Activated T-helper 1 cell treated with anti-CD3 and anti-CD28 coated beads, Interleukin-12 subunit alpha, Interleukin-12 subunit beta, Interleukin-2, Interleukin-4 antibody, amounts not matched to agents 30 ng/mL and 10 ng/mL and 1 ng/mL, durations not matched to agents 14 hours and 24 hours and 36 hours (primary cell): ENCODE measurements at regions of chr13 and their contacts with region 1.

Region 1: GRCh38 chr13:40026174-40026585 is 370.7 kb downstream of the COG6 start:
- DNase-seq: peak; percentile 67
- H3K4me3 Mint-ChIP-seq: peak overlapping the region; percentile 24
- H3K27ac Mint-ChIP-seq: peak overlapping the region; percentile 48
- H3K4me1 Mint-ChIP-seq: peaks cover 59% of the 10 kb centered on the region
- H3K27me3 Mint-ChIP-seq: peaks cover 5% of the 10 kb centered on the region

Region 2: GRCh38 chr13:39095500-39095899 is 930.7 kb before region 1 on chr13:
- intact Hi-C with region 1: loop called (anchors 2 kb)
- DNase-seq: no peak
- H3K4me3 Mint-ChIP-seq: peak overlapping the region; percentile 68
- H3K27ac Mint-ChIP-seq: peak overlapping the region; percentile 92
- H3K4me1 Mint-ChIP-seq: peaks cover 35% of the 10 kb centered on the region
- H3K27me3 Mint-ChIP-seq: no peaks in the 10 kb centered on the region

Region 3: GRCh38 chr13:39970177-39970846 is 55.9 kb before region 1 on chr13:
- intact Hi-C with region 1: no loop called
- DNase-seq: no peak
- H3K4me3 Mint-ChIP-seq: no peak overlapping the region
- H3K27ac Mint-ChIP-seq: no peak overlapping the region
- H3K4me1 Mint-ChIP-seq: peaks cover 5% of the 10 kb centered on the region
- H3K27me3 Mint-ChIP-seq: peaks cover 11% of the 10 kb centered on the region

Region 4: GRCh38 chr13:39998166-39998565 is 28.0 kb before region 1 on chr13:
- intact Hi-C with region 1: loop called (anchors 2 kb)
- DNase-seq: no peak
- H3K4me3 Mint-ChIP-seq: no peak overlapping the region
- H3K27ac Mint-ChIP-seq: no peak overlapping the region
- H3K4me1 Mint-ChIP-seq: peaks cover 13% of the 10 kb centered on the region
- H3K27me3 Mint-ChIP-seq: peaks cover 13% of the 10 kb centered on the region

Region 5: GRCh38 chr13:40012190-40012589 is 14.0 kb before region 1 on chr13:
- intact Hi-C with region 1: no loop called
- DNase-seq: no peak
- H3K4me3 Mint-ChIP-seq: no peak overlapping the region
- H3K27ac Mint-ChIP-seq: no peak overlapping the region
- H3K4me1 Mint-ChIP-seq: peaks cover 8% of the 10 kb centered on the region
- H3K27me3 Mint-ChIP-seq: peaks cover 11% of the 10 kb centered on the region

Region 6: DNA sequence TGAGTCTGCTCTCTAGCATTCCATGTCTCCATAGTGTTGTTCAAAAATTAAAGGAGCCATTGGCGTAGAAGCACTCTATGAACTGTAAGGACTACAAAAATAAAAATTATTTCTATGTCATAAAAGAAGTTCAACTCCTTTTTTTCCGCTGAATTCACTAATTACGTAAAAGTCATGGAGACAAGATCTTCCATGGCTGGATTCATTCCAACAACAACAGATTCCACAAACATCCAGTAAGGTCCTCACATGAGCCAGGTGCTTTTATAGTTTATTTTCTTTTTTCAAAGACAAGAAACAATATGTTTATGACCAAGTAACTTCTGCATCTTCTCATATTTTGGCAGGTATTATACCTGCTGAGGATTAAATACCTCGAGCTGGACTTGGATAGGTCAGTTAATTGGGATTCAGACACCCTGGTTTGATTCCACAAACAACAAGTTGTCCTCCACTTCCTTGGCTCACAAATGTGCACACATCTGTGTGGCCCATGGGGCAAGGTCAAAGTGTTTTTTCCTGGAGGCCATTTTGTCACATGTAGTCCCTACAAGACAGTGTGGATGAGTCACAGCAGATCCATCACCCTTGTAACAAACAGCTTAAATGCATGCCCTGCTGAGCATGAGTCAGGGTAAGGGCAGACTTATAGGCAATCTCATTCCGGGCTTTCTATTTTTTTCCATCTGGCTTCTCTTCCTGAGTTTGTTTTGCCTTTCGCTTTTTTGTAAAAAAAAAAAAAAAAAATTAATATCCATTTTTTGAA is 104.9 kb after region 1 on chr13:
- intact Hi-C with region 1: loop called (anchors 1 kb)
- DNase-seq: no peak
- H3K4me3 Mint-ChIP-seq: no peak overlapping the region
- H3K27ac Mint-ChIP-seq: peak overlapping the region; percentile 12
- H3K4me1 Mint-ChIP-seq: peaks cover 63% of the 10 kb centered on the region
- H3K27me3 Mint-ChIP-seq: no peaks in the 10 kb centered on the region

Region 7: DNA sequence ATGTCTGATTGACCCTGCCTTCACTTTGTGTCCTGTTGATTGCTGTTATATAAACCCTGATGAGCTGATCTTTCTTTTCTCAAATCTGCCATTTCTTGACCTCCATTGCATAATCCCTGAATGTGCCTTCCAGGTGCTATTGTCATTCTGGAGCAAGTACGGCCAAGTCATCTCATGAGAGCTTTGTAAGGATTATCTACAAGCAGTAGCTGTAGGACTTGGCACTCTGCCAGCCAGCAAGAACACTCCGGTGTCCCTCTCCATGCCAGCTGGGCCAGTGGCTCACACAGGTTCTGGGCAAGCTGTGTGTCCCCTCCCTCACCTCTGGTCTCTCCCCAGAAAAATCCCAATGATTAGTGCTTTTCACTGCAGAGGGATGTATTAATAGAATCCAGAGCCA is 292.2 kb after region 1 on chr13:
- intact Hi-C with region 1: loop called (anchors 1 kb)
- DNase-seq: no peak
- H3K4me3 Mint-ChIP-seq: no peak overlapping the region
- H3K27ac Mint-ChIP-seq: no peak overlapping the region
- H3K4me1 Mint-ChIP-seq: peaks cover 70% of the 10 kb centered on the region
- H3K27me3 Mint-ChIP-seq: no peaks in the 10 kb centered on the region

Region 8: DNA sequence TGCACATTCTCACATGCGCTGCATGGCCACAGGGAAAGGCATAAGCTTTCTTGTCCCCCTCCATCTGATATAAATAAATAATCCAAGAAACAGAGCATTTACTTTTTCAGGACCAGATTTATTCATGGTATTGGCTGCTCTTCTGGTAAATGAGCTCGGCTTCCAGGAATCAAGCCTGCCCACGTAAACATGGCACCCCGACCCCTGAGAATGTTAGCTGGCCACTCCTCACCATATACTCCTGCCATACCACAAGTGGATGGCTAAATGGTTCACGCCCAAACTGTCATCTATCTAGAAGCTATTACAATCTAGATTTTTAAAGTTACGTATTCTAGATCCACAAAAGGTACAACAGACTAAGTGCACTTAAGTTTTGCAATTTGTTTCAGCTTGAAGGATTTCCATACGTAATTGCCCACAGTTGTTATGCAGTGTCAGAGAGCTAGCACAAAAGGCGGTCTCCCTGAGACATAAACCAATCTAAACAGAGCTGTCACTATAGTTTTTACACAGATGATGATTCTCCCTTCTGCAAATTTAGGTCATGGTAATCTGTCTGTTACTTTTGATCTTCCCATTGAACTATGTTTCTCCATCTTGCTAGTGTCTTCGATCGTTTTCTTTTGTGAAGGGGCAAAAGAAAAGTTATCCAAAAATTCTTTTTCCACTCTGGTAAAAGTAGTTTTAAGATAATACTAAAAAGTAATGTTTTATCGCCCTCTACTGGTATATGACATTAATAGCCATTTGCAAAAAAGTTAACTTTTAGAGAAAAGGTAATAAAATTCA is 656.5 kb after region 1 on chr13:
- intact Hi-C with region 1: loop called (anchors 2 kb)
- DNase-seq: no peak
- H3K4me3 Mint-ChIP-seq: no peak overlapping the region
- H3K27ac Mint-ChIP-seq: peak overlapping the region; percentile 46
- H3K4me1 Mint-ChIP-seq: peaks cover 15% of the 10 kb centered on the region
- H3K27me3 Mint-ChIP-seq: peaks cover 2% of the 10 kb centered on the region